HCT116 (cell line): ENCODE measurements at regions of chr15 and their contacts with region 1.

Region 1: GRCh38 chr15:33086507-33087121 is 107.9 kb downstream of the FMN1 start:
- DNase-seq: peak; percentile 42
- ATAC-seq: peak; percentile 74
- H3K4me3 ChIP-seq: no peak overlapping the region
- H3K27ac ChIP-seq: no peak overlapping the region
- H3K4me1 ChIP-seq: peaks cover 13 to 21% of the 10 kb centered on the region in 2 experiments
- H3K27me3 ChIP-seq: no peaks in the 10 kb centered on the region
- CTCF ChIP-seq: peak; percentile 44 to 72 (median 53); a peak in 5 of 6 replicates
- POLR2A ChIP-seq: no peak
- RAD21 ChIP-seq: peak; percentile 70

Region 2: DNA sequence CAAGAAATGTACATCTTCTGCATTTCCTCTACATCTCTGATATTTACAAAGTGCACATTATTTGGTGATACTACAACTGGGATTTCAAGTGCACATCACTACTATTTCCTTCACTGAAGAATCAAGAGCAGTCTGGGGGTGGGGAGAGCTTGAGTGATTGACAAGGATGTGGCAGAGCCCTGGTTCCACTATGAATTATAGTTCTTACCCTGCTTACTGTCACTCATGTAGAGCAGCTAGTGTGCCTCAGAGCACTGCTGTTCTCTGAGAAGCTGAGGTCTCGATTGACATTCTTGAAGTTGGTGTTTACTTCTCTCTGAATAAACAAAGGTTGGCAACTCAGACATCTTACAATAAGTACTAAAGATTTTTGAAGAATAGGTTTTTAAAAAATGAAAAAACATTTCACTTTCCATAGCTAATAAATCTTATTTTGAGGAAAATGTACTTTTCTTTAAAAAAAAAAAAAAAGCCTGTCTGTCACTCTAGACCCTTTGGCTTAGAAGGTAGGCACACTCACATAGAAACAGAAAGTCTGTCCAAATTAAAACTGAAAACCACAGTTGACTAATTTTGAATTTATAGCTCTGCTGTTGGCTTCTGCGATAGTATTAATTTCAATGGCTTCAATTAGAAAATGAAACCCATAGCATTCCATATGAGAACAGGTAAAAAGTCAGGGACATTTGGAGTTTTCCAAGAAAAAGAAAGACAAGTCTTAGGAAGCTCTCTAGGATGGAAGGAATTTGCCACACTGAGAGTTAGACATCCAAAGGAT is 363.3 kb before region 1 on chr15:
- CTCF ChIA-PET with region 1: no interaction called
- POLR2A ChIA-PET with region 1: no interaction called
- RAD21 ChIA-PET with region 1: no interaction called
- intact Hi-C with region 1: no loop called
- DNase-seq: no peak
- ATAC-seq: no peak
- H3K4me3 ChIP-seq: no peak overlapping the region
- H3K27ac ChIP-seq: no peak overlapping the region
- H3K4me1 ChIP-seq: no peaks in the 10 kb centered on the region
- H3K27me3 ChIP-seq: no peaks in the 10 kb centered on the region
- CTCF ChIP-seq: no peak
- POLR2A ChIP-seq: no peak
- RAD21 ChIP-seq: no peak

Region 3: GRCh38 chr15:33226559-33227181 is 140.1 kb after region 1 on chr15:
- CTCF ChIA-PET with region 1: no interaction called
- POLR2A ChIA-PET with region 1: no interaction called
- RAD21 ChIA-PET with region 1: no interaction called
- intact Hi-C with region 1: loop called (anchors 10 kb)
- DNase-seq: peak; percentile 70
- ATAC-seq: peak; percentile 96
- H3K4me3 ChIP-seq: no peak overlapping the region
- H3K27ac ChIP-seq: no peak overlapping the region
- H3K4me1 ChIP-seq: no peaks in the 10 kb centered on the region
- H3K27me3 ChIP-seq: no peaks in the 10 kb centered on the region
- CTCF ChIP-seq: peak; percentile 12 to 69 (median 58); a peak in 4 of 6 replicates
- POLR2A ChIP-seq: no peak
- RAD21 ChIP-seq: peak; percentile 27; the same call in 1 of the 2 replicates

Region 4: DNA sequence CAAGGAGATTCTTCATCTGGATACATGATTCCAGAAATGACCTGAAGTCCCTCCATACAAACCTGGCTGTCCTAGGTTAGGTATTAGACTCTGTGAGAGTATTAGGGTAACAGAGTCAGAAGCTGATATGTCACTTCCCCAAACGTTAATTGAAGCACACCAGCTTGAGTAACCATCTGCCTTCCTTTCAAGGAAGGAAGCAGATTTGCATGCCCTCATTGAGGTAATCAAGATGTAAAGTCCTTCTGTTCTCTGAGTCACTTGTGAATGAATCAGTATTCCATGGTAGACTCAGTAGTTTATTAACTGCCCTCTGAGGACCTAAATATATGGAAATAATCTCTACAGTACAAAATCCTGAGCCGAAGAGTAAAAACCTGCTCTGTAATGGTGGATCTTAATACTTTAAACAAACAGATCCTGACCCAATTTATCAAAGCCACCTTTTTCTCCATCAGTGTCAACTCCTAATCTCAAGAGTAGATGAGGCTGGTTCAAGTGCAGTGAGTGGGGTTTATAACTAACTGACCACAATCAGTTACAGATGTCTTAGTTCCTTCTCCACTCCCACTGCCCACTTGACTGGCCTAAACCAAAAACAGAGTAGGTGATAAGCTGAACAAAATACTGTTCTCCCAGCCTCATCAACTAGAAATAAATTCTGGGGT is 635.5 kb after region 1 on chr15:
- CTCF ChIA-PET with region 1: no interaction called
- POLR2A ChIA-PET with region 1: no interaction called
- RAD21 ChIA-PET with region 1: no interaction called
- intact Hi-C with region 1: loop called (anchors 10 kb)
- DNase-seq: no peak
- ATAC-seq: no peak
- H3K4me3 ChIP-seq: no peak overlapping the region
- H3K27ac ChIP-seq: no peak overlapping the region
- H3K4me1 ChIP-seq: peaks cover 0 to 7% of the 10 kb centered on the region in 2 experiments; a peak in 1 of 4 replicates
- H3K27me3 ChIP-seq: 0 out of 2 replicates have a peak, but pooled peaks cover 3% of the 10 kb centered on the region
- CTCF ChIP-seq: no peak
- POLR2A ChIP-seq: no peak
- RAD21 ChIP-seq: no peak